ENCODE measurements at regions of chr16 and their contacts with region 1.

Region 1: GRCh38 chr16:27972500-27972899 is 91.0 kb downstream of the GSG1L start:
- DNase-seq: peak; percentile 83
- H3K4me3 Mint-ChIP-seq: no peak overlapping the region
- H3K27ac Mint-ChIP-seq: no peak overlapping the region
- H3K4me1 Mint-ChIP-seq: no peaks in the 10 kb centered on the region
- H3K27me3 Mint-ChIP-seq: peaks cover 12% of the 10 kb centered on the region

Region 2: GRCh38 chr16:27935076-27935475 is 37.4 kb before region 1 on chr16:
- intact Hi-C with region 1: no loop called
- DNase-seq: no peak
- H3K4me3 Mint-ChIP-seq: no peak overlapping the region
- H3K27ac Mint-ChIP-seq: no peak overlapping the region
- H3K4me1 Mint-ChIP-seq: no peaks in the 10 kb centered on the region
- H3K27me3 Mint-ChIP-seq: no peaks in the 10 kb centered on the region

Region 3: GRCh38 chr16:28069971-28070794 is 97.7 kb after region 1 on chr16:
- intact Hi-C with region 1: loop called (anchors 1 kb)
- DNase-seq: no peak
- H3K4me3 Mint-ChIP-seq: no peak overlapping the region
- H3K27ac Mint-ChIP-seq: no peak overlapping the region
- H3K4me1 Mint-ChIP-seq: peaks cover 2% of the 10 kb centered on the region
- H3K27me3 Mint-ChIP-seq: peaks cover 9% of the 10 kb centered on the region

Region 4: GRCh38 chr16:28180655-28181460 is 208.4 kb after region 1 on chr16:
- intact Hi-C with region 1: no loop called
- DNase-seq: no peak
- H3K4me3 Mint-ChIP-seq: peak overlapping the region; percentile 60
- H3K27ac Mint-ChIP-seq: peak overlapping the region; percentile 99
- H3K4me1 Mint-ChIP-seq: peaks cover 63% of the 10 kb centered on the region
- H3K27me3 Mint-ChIP-seq: no peaks in the 10 kb centered on the region

Region 5: DNA sequence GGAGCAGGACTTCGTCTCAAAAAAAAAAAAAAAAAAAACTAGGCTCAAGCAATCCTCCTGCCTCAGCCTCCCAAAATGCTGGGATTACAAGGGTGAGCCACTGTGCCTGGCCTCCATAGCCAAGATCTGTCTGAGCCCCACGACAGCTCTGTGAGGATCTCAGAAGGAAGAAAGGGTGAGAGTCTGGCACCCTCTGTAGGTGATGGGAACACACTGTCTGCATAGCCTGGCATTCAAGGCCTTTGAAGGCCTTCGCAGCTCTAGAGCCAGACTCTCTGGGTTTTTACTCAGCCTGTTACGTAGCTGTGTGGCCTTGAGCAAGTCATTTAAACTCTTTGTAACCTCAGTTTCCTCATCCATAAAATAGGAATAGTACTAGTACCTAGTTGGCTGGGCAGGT is 245.6 kb after region 1 on chr16:
- intact Hi-C with region 1: loop called (anchors 1 kb)
- DNase-seq: peak; percentile 90
- H3K4me3 Mint-ChIP-seq: no peak overlapping the region
- H3K27ac Mint-ChIP-seq: no peak overlapping the region
- H3K4me1 Mint-ChIP-seq: peaks cover 2% of the 10 kb centered on the region
- H3K27me3 Mint-ChIP-seq: no peaks in the 10 kb centered on the region

Measured in activated CD4-positive, alpha-beta T cell treated with anti-CD3 and anti-CD28 coated beads, Interleukin-2, amount 10 ng/mL, durations not matched to agents 24 days and 14 days (primary cell).